Heart left ventricle (tissue), 16 donors: ENCODE measurements at regions of chr11 and their contacts with region 1.

Region 1: DNA sequence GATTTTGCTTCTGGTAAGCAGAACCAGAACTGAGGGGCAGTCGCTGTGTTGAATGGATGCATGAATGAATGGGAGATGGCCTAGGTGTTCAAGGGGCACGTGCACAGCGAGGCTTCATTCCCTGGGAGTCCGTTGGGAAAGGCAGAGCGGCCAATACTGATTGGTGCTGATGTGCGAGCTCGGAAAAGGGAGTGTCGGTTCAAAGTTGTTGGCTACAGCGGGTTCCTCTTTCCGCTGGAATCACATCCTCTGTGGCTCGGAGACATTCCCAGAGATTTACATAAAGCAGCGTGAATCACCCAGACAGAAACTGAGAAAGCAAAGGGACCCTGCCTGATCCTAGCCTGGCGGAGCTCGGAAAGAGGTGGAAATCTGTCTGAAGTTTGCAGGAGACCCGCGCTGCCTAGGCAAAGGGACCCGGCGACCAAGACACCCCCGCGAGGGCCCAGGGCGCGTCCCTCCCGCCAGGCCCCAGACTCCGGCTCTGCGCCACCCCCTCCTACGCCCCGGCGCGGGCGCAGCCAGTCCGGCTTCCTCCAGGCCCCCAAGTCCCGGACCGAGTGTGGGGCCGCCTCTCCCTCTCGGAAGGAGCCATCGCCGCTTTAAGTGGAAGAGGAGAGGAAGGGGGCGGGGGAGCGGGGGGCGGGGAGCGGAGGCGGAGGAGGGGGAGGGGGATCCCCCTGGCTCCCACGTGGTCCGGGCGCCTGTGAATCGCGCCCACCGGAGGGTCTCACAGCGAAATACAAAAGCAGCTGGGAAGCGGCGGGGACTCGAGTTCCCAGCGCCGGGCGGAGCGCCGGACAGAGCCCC is at the start of gene FJX1:
- DNase-seq: peak; percentile 61 to 79 (median 72)
- ATAC-seq: peak; percentile 48 to 80 (median 78)
- H3K4me3 ChIP-seq: peak within 1 kb of the TSS; percentile 49 to 73 (median 63)
- H3K27ac ChIP-seq: peak within 1 kb of the TSS; percentile 37 to 91 (median 83)
- H3K4me1 ChIP-seq: peaks cover 3 to 43% (median 25%) of the 10 kb centered on the region in 12 donors
- H3K27me3 ChIP-seq: peaks cover 0 to 61% (median 4%) of the 10 kb centered on the region in 9 donors
- CTCF ChIP-seq: no peak
- POLR2A ChIP-seq: peak in 1 of 2 donors; percentile 35
- total RNA-seq, gene FJX1: 0.55 to 7.2 (median 2.3) TPM

Region 2: DNA sequence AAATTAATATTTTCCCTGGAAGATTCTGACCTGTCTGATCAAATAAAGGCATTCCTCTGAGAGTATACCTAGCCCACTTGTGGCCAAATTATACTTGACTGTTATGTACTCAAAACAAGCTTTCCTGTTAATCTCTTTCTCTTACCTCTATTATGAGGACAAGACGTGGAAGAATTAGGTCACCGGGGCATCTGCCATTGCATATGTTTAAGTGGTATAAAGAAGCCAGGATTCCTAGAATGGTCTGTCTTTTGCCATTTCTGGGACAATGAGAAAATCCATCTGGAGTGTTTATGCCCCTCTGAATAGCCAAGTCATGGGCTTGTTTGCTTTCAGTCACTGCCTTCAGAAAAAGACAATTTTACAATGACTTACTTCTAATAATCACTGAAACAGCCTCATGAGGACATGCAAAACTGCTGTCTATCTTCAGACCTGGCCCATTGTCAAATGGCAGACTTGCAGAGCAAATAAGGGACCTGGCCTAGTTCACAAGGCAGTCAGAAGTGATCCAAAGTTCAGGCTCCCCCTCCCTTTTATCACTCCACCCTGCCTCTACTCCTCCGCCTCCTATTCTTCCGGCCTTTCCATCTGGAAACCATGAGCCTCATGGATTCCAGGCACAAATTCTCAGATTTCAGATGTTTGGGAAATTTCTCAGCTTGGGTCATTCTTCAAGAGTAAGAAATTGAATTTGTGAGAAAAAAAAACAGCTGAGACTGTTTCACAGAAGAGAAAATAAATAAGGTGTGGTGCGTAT is 197.8 kb after region 1 on chr11:
- intact Hi-C with region 1: loop called in 8 of 10 experiments (anchors 5 kb)
- DNase-seq: peak in 4 of 5 donors; percentile 59 to 65 (median 59)
- ATAC-seq: peak in 3 of 4 donors; percentile 69 to 74 (median 71)
- H3K4me3 ChIP-seq: no peak overlapping the region
- H3K27ac ChIP-seq: peak overlapping the region in 3 of 12 donors; percentile 3 to 61 (median 24)
- H3K4me1 ChIP-seq: peaks cover 0 to 50% (median 32%) of the 10 kb centered on the region in 12 donors
- H3K27me3 ChIP-seq: no peaks in the 10 kb centered on the region
- CTCF ChIP-seq: no peak
- POLR2A ChIP-seq: no peak

Region 3: GRCh38 chr11:35943713-35944655 is 326.1 kb after region 1 on chr11 and contains the start of gene LDLRAD3:
- intact Hi-C with region 1: loop called in 1 of 10 experiments (anchors 10 kb)
- DNase-seq: peak; percentile 76 to 91 (median 82)
- ATAC-seq: peak; percentile 67 to 94 (median 92)
- H3K4me3 ChIP-seq: peak within 1 kb of the TSS; percentile 9 to 77 (median 62)
- H3K27ac ChIP-seq: peak within 1 kb of the TSS in 10 of 12 donors; percentile 25 to 68 (median 60)
- H3K4me1 ChIP-seq: peaks cover 0 to 29% (median 9%) of the 10 kb centered on the region in 12 donors
- H3K27me3 ChIP-seq: peaks cover 0 to 6% (median 0%) of the 10 kb centered on the region in 9 donors
- CTCF ChIP-seq: no peak
- POLR2A ChIP-seq: no peak
- total RNA-seq, gene LDLRAD3: 1.5 to 7.7 (median 2.6) TPM

Region 4: DNA sequence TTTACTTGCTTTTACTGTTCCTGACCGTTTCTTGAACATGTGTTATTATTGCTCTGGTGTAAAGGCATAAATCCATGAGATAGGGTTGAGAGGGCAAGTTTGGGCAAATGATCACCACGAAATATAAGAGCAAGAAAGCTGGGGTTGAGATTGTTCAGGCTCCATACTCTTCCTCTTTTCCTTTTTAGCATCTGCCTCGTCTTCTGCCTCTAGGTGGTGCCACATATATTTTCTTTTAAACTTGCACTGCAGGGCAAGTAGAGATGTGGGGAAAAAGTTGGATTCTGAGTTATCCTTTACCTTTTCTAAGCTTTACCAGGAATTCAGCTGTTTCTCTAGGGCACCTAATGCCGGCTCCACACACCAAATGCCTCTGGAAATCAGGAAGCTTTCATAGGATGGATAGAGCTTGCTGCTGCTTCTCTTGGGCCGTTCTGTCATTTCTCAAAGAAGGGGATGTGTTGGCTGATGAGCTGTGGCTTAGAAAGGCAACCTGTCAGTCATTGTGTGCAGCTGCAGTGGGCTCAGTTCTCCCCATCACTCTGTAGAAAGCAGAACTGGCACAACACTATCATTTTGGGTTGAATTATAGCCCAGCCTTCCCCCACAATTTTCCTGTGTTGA is 424.2 kb after region 1 on chr11:
- intact Hi-C with region 1: loop called in 3 of 10 experiments (anchors 5 to 10 kb)
- DNase-seq: no peak
- ATAC-seq: peak in 1 of 4 donors; percentile 48
- H3K4me3 ChIP-seq: no peak overlapping the region
- H3K27ac ChIP-seq: no peak overlapping the region
- H3K4me1 ChIP-seq: peaks cover 0 to 4% (median 0%) of the 10 kb centered on the region in 12 donors
- H3K27me3 ChIP-seq: no peaks in the 10 kb centered on the region
- CTCF ChIP-seq: peak in 10 of 12 donors; percentile 21 to 60 (median 42)
- POLR2A ChIP-seq: no peak

Region 5: GRCh38 chr11:36131721-36132397 is 514.0 kb after region 1 on chr11:
- intact Hi-C with region 1: loop called (anchors 1 to 5 kb)
- DNase-seq: peak in 4 of 5 donors; percentile 48 to 57 (median 56)
- ATAC-seq: peak; percentile 75 to 86 (median 84)
- H3K4me3 ChIP-seq: no peak overlapping the region
- H3K27ac ChIP-seq: no peak overlapping the region
- H3K4me1 ChIP-seq: peaks cover 0 to 12% (median 0%) of the 10 kb centered on the region in 12 donors
- H3K27me3 ChIP-seq: peaks cover 0 to 8% (median 0%) of the 10 kb centered on the region in 9 donors
- CTCF ChIP-seq: peak; percentile 51 to 92 (median 74)
- POLR2A ChIP-seq: no peak

Region 6: GRCh38 chr11:36258730-36259360 is 641.0 kb after region 1 on chr11:
- intact Hi-C with region 1: loop called in 4 of 10 experiments (anchors 2 to 5 kb)
- DNase-seq: peak; percentile 44 to 73 (median 55)
- ATAC-seq: peak; percentile 59 to 92 (median 81)
- H3K4me3 ChIP-seq: no peak overlapping the region
- H3K27ac ChIP-seq: no peak overlapping the region
- H3K4me1 ChIP-seq: peaks cover 0 to 6% (median 0%) of the 10 kb centered on the region in 12 donors
- H3K27me3 ChIP-seq: peaks cover 0 to 15% (median 0%) of the 10 kb centered on the region in 9 donors
- CTCF ChIP-seq: peak; percentile 42 to 70 (median 56)
- POLR2A ChIP-seq: no peak

Region 7: GRCh38 chr11:36478700-36479329 is 860.9 kb after region 1 on chr11:
- intact Hi-C with region 1: loop called in 6 of 10 experiments (anchors 5 to 10 kb)
- DNase-seq: peak in 1 of 5 donors; percentile 30
- ATAC-seq: peak in 3 of 4 donors; percentile 70 to 80 (median 78)
- H3K4me3 ChIP-seq: no peak overlapping the region
- H3K27ac ChIP-seq: no peak overlapping the region
- H3K4me1 ChIP-seq: peaks cover 0 to 17% (median 5%) of the 10 kb centered on the region in 12 donors
- H3K27me3 ChIP-seq: no peaks in the 10 kb centered on the region
- CTCF ChIP-seq: peak; percentile 25 to 77 (median 62)
- POLR2A ChIP-seq: no peak